Cardiac septum (tissue), 1 donor: ENCODE measurements at regions of chr3 and their contacts with region 1.

Region 1: DNA sequence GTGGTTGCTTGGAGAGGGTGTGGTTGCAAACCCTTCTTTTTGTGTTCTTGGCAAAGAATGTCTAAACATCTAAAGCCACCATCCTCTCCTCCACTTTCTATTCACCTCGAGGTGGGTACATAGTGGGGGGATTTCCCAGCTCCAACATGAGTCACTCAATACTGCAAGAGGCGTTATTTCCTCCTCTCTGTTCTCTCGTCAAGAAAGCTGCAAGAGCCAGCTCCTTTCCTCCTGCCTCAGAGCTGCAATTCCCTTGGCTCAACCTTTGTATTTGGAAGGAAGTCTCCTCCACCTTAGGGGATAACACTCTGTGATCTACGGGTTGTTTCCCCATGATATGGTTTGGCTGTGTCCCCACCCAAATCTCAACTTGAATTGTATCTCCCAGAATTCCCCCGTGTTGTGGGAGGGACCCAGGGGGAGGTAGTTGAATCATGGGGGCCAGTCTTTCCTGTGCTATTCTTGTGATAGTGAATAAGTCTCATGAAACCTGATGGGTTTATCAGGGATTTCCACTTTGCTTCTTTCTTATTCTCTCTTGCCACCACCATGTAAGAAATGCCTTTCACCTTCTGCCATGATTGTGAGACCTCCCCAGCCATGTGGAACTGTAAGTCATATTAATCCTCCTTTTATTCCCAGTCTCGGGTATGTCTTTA is 138.4 kb downstream of the PLCL2 start:
- DNase-seq: no peak

Region 2: DNA sequence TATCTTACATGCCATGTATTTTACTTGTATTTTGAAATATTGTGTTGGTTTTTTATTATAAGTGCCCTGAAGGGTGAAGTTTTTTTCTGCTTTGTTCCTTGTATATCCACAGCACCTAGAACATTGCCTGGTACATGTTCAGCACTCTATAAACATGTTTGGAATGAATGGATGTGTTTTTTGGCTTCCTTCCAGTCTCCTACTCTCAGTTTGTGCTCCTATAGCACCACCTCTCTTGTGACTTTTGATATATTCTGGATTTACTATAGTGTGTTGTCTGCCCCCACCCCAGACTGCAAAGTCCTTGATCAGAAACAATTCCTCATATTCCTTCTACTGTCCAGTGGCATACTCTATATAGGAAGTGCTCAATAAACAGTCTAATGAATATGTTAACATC is 77.8 kb before region 1 on chr3:
- intact Hi-C with region 1: loop called (anchors 10 kb)
- DNase-seq: no peak

Region 3: GRCh38 chr3:17544632-17545031 is 521.5 kb after region 1 on chr3:
- intact Hi-C with region 1: no loop called
- DNase-seq: no peak